Activated CD8-positive, alpha-beta T cell treated with anti-CD3 and anti-CD28 coated beads for 36 hours (primary cell): ENCODE measurements at regions of chrX and their contacts with region 1.

Region 1: GRCh38 chrX:22069586-22069985 is 37.5 kb downstream of the PHEX start:
- DNase-seq: no peak
- ATAC-seq: no peak
- H3K4me3 Mint-ChIP-seq: no peak overlapping the region
- H3K27ac Mint-ChIP-seq: no peak overlapping the region
- H3K4me1 Mint-ChIP-seq: peaks cover 33% of the 10 kb centered on the region
- H3K27me3 Mint-ChIP-seq: no peaks in the 10 kb centered on the region
- CTCF ChIP-seq: no peak

Region 2: DNA sequence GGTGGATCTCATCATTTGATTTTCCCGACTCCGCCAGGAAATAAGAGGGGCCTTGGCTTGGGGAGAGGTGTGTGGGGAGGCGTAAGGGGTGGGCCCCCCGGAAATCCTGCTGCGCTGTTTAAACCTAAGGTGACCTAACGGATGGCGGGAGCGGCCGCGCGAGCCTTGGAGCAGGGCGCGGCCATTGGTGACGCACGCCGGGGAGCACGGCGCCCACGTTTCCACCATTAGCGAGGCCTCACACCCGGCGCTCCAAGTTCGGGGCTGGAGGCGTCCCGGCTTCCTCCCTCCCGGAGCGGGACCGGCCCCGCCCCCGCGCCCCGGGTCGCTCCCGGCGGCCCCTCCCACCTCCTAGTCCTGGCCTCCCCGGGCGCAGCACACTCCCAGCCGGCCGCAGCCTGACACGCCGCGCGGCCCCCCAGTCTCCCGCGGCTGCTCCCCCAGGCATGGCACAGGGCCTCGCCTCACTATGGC is 129.2 kb before region 1 on chrX and contains the start of gene SMS:
- CTCF ChIA-PET with region 1: no interaction called
- POLR2A ChIA-PET with region 1: no interaction called
- intact Hi-C with region 1: no loop called
- DNase-seq: peak; percentile 75
- ATAC-seq: peak; percentile 71
- H3K4me3 Mint-ChIP-seq: peak within 1 kb of the TSS; percentile 91
- H3K27ac Mint-ChIP-seq: peak within 1 kb of the TSS; percentile 92
- H3K4me1 Mint-ChIP-seq: peaks cover 32% of the 10 kb centered on the region
- H3K27me3 Mint-ChIP-seq: no peaks in the 10 kb centered on the region
- CTCF ChIP-seq: no peak
- total RNA-seq, gene SMS: 175 to 184 TPM

Region 3: GRCh38 chrX:22081475-22082092 is 12.0 kb after region 1 on chrX:
- CTCF ChIA-PET with region 1: interaction called, 26 read pairs
- POLR2A ChIA-PET with region 1: interaction called, 3 read pairs
- intact Hi-C with region 1: no loop called
- DNase-seq: peak; percentile 70
- ATAC-seq: peak; percentile 66
- H3K4me3 Mint-ChIP-seq: no peak overlapping the region
- H3K27ac Mint-ChIP-seq: no peak overlapping the region
- H3K4me1 Mint-ChIP-seq: peaks cover 17% of the 10 kb centered on the region
- H3K27me3 Mint-ChIP-seq: no peaks in the 10 kb centered on the region
- CTCF ChIP-seq: peak; percentile 53

Region 4: DNA sequence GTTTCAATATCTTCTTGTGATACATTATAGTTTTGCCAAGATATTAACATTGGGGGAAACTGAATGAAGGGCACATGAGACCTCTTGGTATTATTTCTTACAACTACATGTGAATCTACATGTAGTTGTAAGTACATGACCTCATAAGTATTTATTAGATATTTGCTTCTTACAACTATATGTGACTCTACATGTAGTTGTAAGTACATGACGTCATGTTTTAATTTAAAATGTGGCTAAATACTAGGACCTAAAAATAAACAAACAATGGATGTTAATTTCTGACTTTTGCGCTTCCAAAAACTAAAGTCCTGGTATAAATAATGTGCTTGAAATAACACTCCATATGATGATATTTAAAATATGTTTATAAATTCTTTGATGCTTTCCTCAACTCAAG is 393.4 kb after region 1 on chrX:
- CTCF ChIA-PET with region 1: no interaction called
- POLR2A ChIA-PET with region 1: no interaction called
- intact Hi-C with region 1: no loop called
- DNase-seq: no peak
- ATAC-seq: no peak
- H3K4me3 Mint-ChIP-seq: no peak overlapping the region
- H3K27ac Mint-ChIP-seq: no peak overlapping the region
- H3K4me1 Mint-ChIP-seq: no peaks in the 10 kb centered on the region
- H3K27me3 Mint-ChIP-seq: no peaks in the 10 kb centered on the region
- CTCF ChIP-seq: no peak